ENCODE measurements at regions of chr18 and their contacts with region 1.

Region 1: GRCh38 chr18:61955644-61956043 is 62.8 kb upstream of the RNF152 start:
- DNase-seq: no peak
- ATAC-seq: no peak
- H3K4me3 Mint-ChIP-seq: no peak overlapping the region
- H3K27ac Mint-ChIP-seq: no peak overlapping the region
- H3K4me1 Mint-ChIP-seq: peaks cover 20% of the 10 kb centered on the region
- H3K27me3 Mint-ChIP-seq: peaks cover 9% of the 10 kb centered on the region

Region 2: GRCh38 chr18:61926532-61926931 is 29.1 kb before region 1 on chr18:
- CTCF ChIA-PET with region 1: interaction called, 3 read pairs
- POLR2A ChIA-PET with region 1: no interaction called
- intact Hi-C with region 1: loop called (anchors 1 kb)
- DNase-seq: peak; percentile 65
- ATAC-seq: peak; percentile 83
- H3K4me3 Mint-ChIP-seq: no peak overlapping the region
- H3K27ac Mint-ChIP-seq: no peak overlapping the region
- H3K4me1 Mint-ChIP-seq: peaks cover 25% of the 10 kb centered on the region
- H3K27me3 Mint-ChIP-seq: peaks cover 1% of the 10 kb centered on the region

Region 3: GRCh38 chr18:61975526-61976326 is 20.1 kb after region 1 on chr18:
- CTCF ChIA-PET with region 1: interaction called, 3 read pairs
- POLR2A ChIA-PET with region 1: no interaction called
- intact Hi-C with region 1: loop called in 1 of 2 experiments (anchors 1 kb)
- DNase-seq: peak; percentile 27
- ATAC-seq: peak; percentile 78
- H3K4me3 Mint-ChIP-seq: no peak overlapping the region
- H3K27ac Mint-ChIP-seq: peak overlapping the region; percentile 55
- H3K4me1 Mint-ChIP-seq: peaks cover 28% of the 10 kb centered on the region
- H3K27me3 Mint-ChIP-seq: no peaks in the 10 kb centered on the region